Pancreas (tissue), 10 donors: ENCODE measurements at regions of chrX and their contacts with region 1.

Region 1: GRCh38 chrX:20530406-20530921 is 263.8 kb upstream of the RPS6KA3 start:
- DNase-seq: peak in 5 of 6 donors; percentile 9 to 62 (median 39)
- ATAC-seq: peak; percentile 58 to 91 (median 82)
- H3K4me3 ChIP-seq: no peak overlapping the region
- H3K27ac ChIP-seq: no peak overlapping the region
- H3K4me1 ChIP-seq: no peaks in the 10 kb centered on the region
- H3K27me3 ChIP-seq: peaks cover 0 to 5% (median 0%) of the 10 kb centered on the region in 4 donors
- CTCF ChIP-seq: peak; percentile 61 to 74 (median 68)

Region 2: DNA sequence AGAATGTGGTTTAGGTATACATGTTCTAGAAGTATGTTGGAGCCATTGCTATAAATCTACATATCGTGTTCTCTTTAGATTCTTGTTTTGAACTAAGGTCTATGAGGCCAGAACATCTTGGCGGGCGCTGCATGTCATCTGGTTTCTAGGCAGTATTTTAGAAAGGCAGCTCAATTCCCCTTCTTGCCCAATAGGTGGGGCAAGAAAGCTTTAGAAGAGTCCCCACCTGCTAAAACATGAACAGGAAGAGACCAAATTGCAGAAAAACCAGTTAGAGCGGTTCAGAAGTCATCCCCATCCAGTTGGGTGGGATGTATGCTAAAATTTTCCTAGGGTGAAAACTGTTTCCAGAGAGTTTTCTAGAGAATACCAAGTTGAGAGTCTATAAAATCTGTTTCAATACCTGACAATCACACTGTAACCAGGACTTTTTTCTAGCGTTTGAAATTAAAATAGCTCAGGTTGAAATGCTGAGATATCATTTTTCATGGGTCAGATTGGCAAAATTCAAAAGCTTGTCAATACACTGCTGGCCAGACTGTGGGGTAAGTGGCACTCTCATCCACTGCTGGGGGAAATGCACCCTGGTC is 625.6 kb before region 1 on chrX:
- intact Hi-C with region 1: no loop called
- DNase-seq: peak in 2 of 6 donors; percentile 7 to 28
- ATAC-seq: peak; percentile 72 to 96 (median 93)
- H3K4me3 ChIP-seq: no peak overlapping the region
- H3K27ac ChIP-seq: no peak overlapping the region
- H3K4me1 ChIP-seq: peaks cover 0 to 3% (median 0%) of the 10 kb centered on the region in 3 donors
- H3K27me3 ChIP-seq: peaks cover 0 to 9% (median 0%) of the 10 kb centered on the region in 4 donors
- CTCF ChIP-seq: peak; percentile 28 to 72 (median 64)

Region 3: DNA sequence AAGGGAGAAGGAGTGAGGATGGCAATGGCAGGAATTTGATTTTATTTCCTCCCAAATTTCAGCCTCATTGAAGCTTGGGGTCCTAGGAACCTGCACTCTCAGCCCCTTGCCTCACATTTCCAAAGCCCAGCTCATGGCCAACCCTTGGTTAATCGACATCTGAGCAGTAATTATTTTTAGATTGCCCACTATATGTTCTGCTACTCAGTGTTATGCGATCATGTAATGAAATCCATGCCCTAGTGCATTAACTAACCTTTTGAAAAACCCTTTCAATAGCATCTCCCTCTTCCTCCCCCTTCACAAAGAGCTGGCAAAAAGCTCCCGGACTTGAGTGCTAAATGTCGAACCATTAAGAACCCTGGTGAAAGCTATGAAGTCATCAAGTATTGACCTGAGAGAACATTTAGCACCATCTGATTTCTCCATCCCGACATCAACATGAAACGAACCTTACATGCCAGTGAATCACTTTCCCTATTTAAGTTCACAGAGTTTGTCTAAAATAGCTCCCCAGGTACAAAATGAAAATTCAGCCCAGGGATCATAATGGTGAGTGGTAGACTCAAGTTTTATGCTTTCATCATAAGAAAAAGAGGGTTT is 204.6 kb before region 1 on chrX:
- intact Hi-C with region 1: no loop called
- DNase-seq: no peak
- ATAC-seq: no peak
- H3K4me3 ChIP-seq: no peak overlapping the region
- H3K27ac ChIP-seq: no peak overlapping the region
- H3K4me1 ChIP-seq: no peaks in the 10 kb centered on the region
- H3K27me3 ChIP-seq: peaks cover 0 to 7% (median 0%) of the 10 kb centered on the region in 4 donors
- CTCF ChIP-seq: no peak

Region 4: GRCh38 chrX:21479695-21480270 is 949.3 kb after region 1 on chrX:
- intact Hi-C with region 1: loop called in 1 of 3 experiments (anchors 10 kb)
- DNase-seq: peak in 1 of 6 donors; percentile 12
- ATAC-seq: peak; percentile 71 to 94 (median 85)
- H3K4me3 ChIP-seq: no peak overlapping the region
- H3K27ac ChIP-seq: no peak overlapping the region
- H3K4me1 ChIP-seq: no peaks in the 10 kb centered on the region
- H3K27me3 ChIP-seq: peaks cover 0 to 4% (median 0%) of the 10 kb centered on the region in 4 donors
- CTCF ChIP-seq: peak in 3 of 4 donors; percentile 24 to 59 (median 55)

Region 5: DNA sequence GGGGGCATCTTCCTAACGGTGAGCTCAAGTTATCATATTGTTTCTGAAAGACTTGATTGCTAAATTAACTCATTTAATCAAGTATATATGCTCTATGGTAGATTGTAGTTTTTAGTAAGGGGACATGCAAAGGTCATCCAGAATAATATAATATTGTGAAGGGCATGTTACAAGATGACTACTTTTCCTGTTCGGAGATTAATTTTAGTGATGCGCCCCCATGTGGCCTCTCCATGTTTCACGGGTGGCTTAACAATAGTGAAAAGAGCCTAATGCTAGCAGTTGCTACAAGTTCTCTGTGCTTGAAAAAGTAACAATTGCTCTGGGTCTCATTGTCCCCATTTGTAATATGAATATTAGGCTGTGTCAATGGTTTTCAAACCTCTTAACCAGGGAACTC is 1215.3 kb after region 1 on chrX:
- intact Hi-C with region 1: loop called in 1 of 3 experiments (anchors 10 kb)
- DNase-seq: peak in 4 of 6 donors; percentile 3 to 62 (median 36)
- ATAC-seq: peak in 2 of 4 donors; percentile 58 to 70
- H3K4me3 ChIP-seq: no peak overlapping the region
- H3K27ac ChIP-seq: no peak overlapping the region
- H3K4me1 ChIP-seq: no peaks in the 10 kb centered on the region
- H3K27me3 ChIP-seq: peaks cover 0 to 20% (median 5%) of the 10 kb centered on the region in 4 donors
- CTCF ChIP-seq: peak; percentile 29 to 42 (median 37)